ENCODE measurements at regions of chr5 and their contacts with region 1.

Region 1: GRCh38 chr5:8756498-8757084 is 789.3 kb downstream of the SEMA5A start:
- DNase-seq: peak in 1 of 2 donors; percentile 55
- H3K4me3 ChIP-seq: no peak overlapping the region
- H3K27ac ChIP-seq: no peak overlapping the region
- H3K4me1 ChIP-seq: no peaks in the 10 kb centered on the region
- H3K27me3 ChIP-seq: no peaks in the 10 kb centered on the region
- CTCF ChIP-seq: peak in 3 of 7 experiments; percentile 16 to 37 (median 30)
- EP300 ChIP-seq: no peak
- POLR2A ChIP-seq: no peak

Region 2: DNA sequence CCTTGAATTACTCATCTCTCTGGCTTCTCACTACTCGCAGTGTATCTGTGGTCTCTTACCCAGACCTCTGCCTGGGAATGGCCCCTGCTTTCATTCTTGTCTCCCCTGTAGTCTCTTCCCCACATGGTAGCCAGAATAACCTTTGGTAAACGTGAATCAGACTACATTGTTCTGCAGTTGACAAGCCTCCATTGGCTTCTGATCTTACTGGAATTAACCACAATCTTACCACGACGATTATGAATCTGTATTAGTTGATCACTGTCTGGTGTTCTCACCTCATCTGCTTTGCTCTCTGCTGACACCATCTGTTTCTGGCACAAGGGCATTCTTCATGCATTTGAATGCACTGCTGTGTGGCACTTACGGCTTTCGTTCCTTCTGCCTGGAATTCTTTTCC is 106.4 kb before region 1 on chr5:
- intact Hi-C with region 1: no loop called
- DNase-seq: no peak
- H3K4me3 ChIP-seq: no peak overlapping the region
- H3K27ac ChIP-seq: no peak overlapping the region
- H3K4me1 ChIP-seq: no peaks in the 10 kb centered on the region
- H3K27me3 ChIP-seq: no peaks in the 10 kb centered on the region
- CTCF ChIP-seq: no peak
- EP300 ChIP-seq: no peak
- POLR2A ChIP-seq: no peak

Region 3: GRCh38 chr5:8829323-8830029 is 72.9 kb after region 1 on chr5:
- intact Hi-C with region 1: no loop called
- DNase-seq: no peak
- H3K4me3 ChIP-seq: no peak overlapping the region
- H3K27ac ChIP-seq: no peak overlapping the region
- H3K4me1 ChIP-seq: no peaks in the 10 kb centered on the region
- H3K27me3 ChIP-seq: no peaks in the 10 kb centered on the region
- CTCF ChIP-seq: no peak
- EP300 ChIP-seq: no peak
- POLR2A ChIP-seq: no peak

Region 4: GRCh38 chr5:9207817-9208418 is 451.3 kb after region 1 on chr5:
- intact Hi-C with region 1: loop called (anchors 10 kb)
- DNase-seq: peak in 1 of 2 donors; percentile 82
- H3K4me3 ChIP-seq: no peak overlapping the region
- H3K27ac ChIP-seq: no peak overlapping the region
- H3K4me1 ChIP-seq: no peaks in the 10 kb centered on the region
- H3K27me3 ChIP-seq: no peaks in the 10 kb centered on the region
- CTCF ChIP-seq: peak in 3 of 7 experiments; percentile 19 to 40 (median 39)
- EP300 ChIP-seq: no peak
- POLR2A ChIP-seq: no peak

Measured in stomach (tissue), 19 donors.